ENCODE measurements at regions of chr11 and their contacts with region 1.

Region 1: GRCh38 chr11:13868710-13869397 is 93.7 kb upstream of the SPON1 start:
- DNase-seq: peak in 9 of 14 experiments; percentile 2 to 90 (median 37)
- ATAC-seq: peak; percentile 89
- H3K4me3 ChIP-seq: no peak overlapping the region
- H3K4me3 Mint-ChIP-seq: peak overlapping the region; percentile 0
- H3K27ac ChIP-seq: peak overlapping the region; percentile 69 to 71
- H3K27ac Mint-ChIP-seq: peak overlapping the region; percentile 83
- H3K4me1 ChIP-seq: peaks cover 10% of the 10 kb centered on the region
- H3K4me1 Mint-ChIP-seq: peaks cover 54% of the 10 kb centered on the region
- H3K27me3 ChIP-seq: no peaks in the 10 kb centered on the region
- H3K27me3 Mint-ChIP-seq: no peaks in the 10 kb centered on the region
- CTCF ChIP-seq: no peak

Region 2: GRCh38 chr11:12653725-12654124 is 1215.1 kb before region 1 on chr11:
- CTCF ChIA-PET with region 1: no interaction called
- POLR2A ChIA-PET with region 1: no interaction called
- intact Hi-C with region 1: no loop called
- DNase-seq: no peak
- ATAC-seq: no peak
- H3K4me3 ChIP-seq: no peak overlapping the region
- H3K4me3 Mint-ChIP-seq: no peak overlapping the region
- H3K27ac ChIP-seq: no peak overlapping the region
- H3K27ac Mint-ChIP-seq: no peak overlapping the region
- H3K4me1 ChIP-seq: no peaks in the 10 kb centered on the region
- H3K4me1 Mint-ChIP-seq: no peaks in the 10 kb centered on the region
- H3K27me3 ChIP-seq: no peaks in the 10 kb centered on the region
- H3K27me3 Mint-ChIP-seq: peaks cover 13% of the 10 kb centered on the region
- CTCF ChIP-seq: no peak

Region 3: GRCh38 chr11:13781148-13781547 is 87.7 kb before region 1 on chr11:
- CTCF ChIA-PET with region 1: no interaction called
- POLR2A ChIA-PET with region 1: no interaction called
- intact Hi-C with region 1: loop called in 1 of 2 experiments (anchors 5 kb)
- DNase-seq: no peak
- ATAC-seq: no peak
- H3K4me3 ChIP-seq: no peak overlapping the region
- H3K4me3 Mint-ChIP-seq: no peak overlapping the region
- H3K27ac ChIP-seq: no peak overlapping the region
- H3K27ac Mint-ChIP-seq: no peak overlapping the region
- H3K4me1 ChIP-seq: no peaks in the 10 kb centered on the region
- H3K4me1 Mint-ChIP-seq: no peaks in the 10 kb centered on the region
- H3K27me3 ChIP-seq: no peaks in the 10 kb centered on the region
- H3K27me3 Mint-ChIP-seq: no peaks in the 10 kb centered on the region
- CTCF ChIP-seq: no peak

Region 4: DNA sequence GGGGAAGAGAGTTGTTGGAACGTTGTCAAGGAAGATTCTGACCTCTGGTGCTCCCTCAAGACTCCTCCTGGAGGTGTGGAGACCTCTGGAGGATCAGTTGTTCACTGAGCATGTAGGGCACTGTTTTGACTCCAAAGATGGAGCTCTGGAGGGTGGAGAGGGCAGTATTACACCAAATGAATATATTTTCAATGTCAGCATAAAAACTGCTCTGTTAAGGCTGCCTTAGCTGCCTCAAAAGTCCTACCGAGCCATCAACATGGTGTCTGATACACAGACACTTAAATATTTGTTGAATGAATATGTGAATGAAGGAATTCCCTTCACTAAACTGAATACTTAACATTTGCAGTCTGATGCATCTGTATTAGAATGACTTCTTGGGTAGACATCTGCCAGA is 50.5 kb before region 1 on chr11:
- CTCF ChIA-PET with region 1: no interaction called
- POLR2A ChIA-PET with region 1: no interaction called
- intact Hi-C with region 1: no loop called
- DNase-seq: no peak
- ATAC-seq: no peak
- H3K4me3 ChIP-seq: no peak overlapping the region
- H3K4me3 Mint-ChIP-seq: no peak overlapping the region
- H3K27ac ChIP-seq: no peak overlapping the region
- H3K27ac Mint-ChIP-seq: no peak overlapping the region
- H3K4me1 ChIP-seq: no peaks in the 10 kb centered on the region
- H3K4me1 Mint-ChIP-seq: no peaks in the 10 kb centered on the region
- H3K27me3 ChIP-seq: no peaks in the 10 kb centered on the region
- H3K27me3 Mint-ChIP-seq: no peaks in the 10 kb centered on the region
- CTCF ChIP-seq: no peak

Region 5: GRCh38 chr11:13923716-13924650 is 55.1 kb after region 1 on chr11:
- CTCF ChIA-PET with region 1: no interaction called
- POLR2A ChIA-PET with region 1: interaction called, 37 read pairs
- intact Hi-C with region 1: loop called in 1 of 2 experiments (anchors 2 kb)
- DNase-seq: peak in 12 of 14 experiments; percentile 3 to 77 (median 25)
- ATAC-seq: peak; percentile 90
- H3K4me3 ChIP-seq: peak overlapping the region; percentile 17
- H3K4me3 Mint-ChIP-seq: peak overlapping the region; percentile 83
- H3K27ac ChIP-seq: peak overlapping the region; percentile 42 to 87
- H3K27ac Mint-ChIP-seq: peak overlapping the region; percentile 95
- H3K4me1 ChIP-seq: peaks cover 47% of the 10 kb centered on the region
- H3K4me1 Mint-ChIP-seq: peaks cover 70% of the 10 kb centered on the region
- H3K27me3 ChIP-seq: no peaks in the 10 kb centered on the region
- H3K27me3 Mint-ChIP-seq: no peaks in the 10 kb centered on the region
- CTCF ChIP-seq: no peak

Region 6: DNA sequence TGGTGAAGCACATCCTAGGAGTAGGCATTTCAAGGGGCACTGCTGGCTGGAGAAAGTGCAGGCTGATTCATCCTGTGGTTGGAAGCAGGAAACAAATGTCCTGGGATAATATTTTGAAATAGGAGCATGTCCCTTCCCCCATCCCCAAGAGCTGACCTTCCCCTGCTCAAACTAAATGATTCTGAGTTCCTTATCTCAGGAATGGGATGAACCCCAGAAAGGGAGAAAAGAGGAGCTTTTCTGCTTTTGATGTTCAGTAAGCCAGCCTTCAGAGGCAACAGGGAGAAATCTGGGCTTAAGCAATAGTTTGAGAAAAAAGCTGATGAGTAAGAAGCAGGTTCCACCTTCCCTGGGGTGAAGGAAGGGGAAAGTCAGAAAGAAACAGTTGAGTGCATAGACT is 74.1 kb after region 1 on chr11:
- CTCF ChIA-PET with region 1: interaction called, 3 read pairs
- POLR2A ChIA-PET with region 1: interaction called, 49 read pairs
- intact Hi-C with region 1: loop called in 1 of 2 experiments (anchors 1 kb)
- DNase-seq: no peak
- ATAC-seq: no peak
- H3K4me3 ChIP-seq: no peak overlapping the region
- H3K4me3 Mint-ChIP-seq: no peak overlapping the region
- H3K27ac ChIP-seq: no peak overlapping the region
- H3K27ac Mint-ChIP-seq: no peak overlapping the region
- H3K4me1 ChIP-seq: peaks cover 56% of the 10 kb centered on the region
- H3K4me1 Mint-ChIP-seq: peaks cover 71% of the 10 kb centered on the region
- H3K27me3 ChIP-seq: no peaks in the 10 kb centered on the region
- H3K27me3 Mint-ChIP-seq: no peaks in the 10 kb centered on the region
- CTCF ChIP-seq: no peak

Region 7: GRCh38 chr11:13962562-13963168 is 93.8 kb after region 1 on chr11 and contains the start of gene SPON1:
- CTCF ChIA-PET with region 1: no interaction called
- POLR2A ChIA-PET with region 1: interaction called, 13 read pairs
- intact Hi-C with region 1: loop called (anchors 5 kb)
- DNase-seq: peak; percentile 30 to 74 (median 52)
- ATAC-seq: peak; percentile 84
- H3K4me3 ChIP-seq: peak within 1 kb of the TSS; percentile 45
- H3K4me3 Mint-ChIP-seq: peak within 1 kb of the TSS; percentile 83
- H3K27ac ChIP-seq: no peak within 1 kb of the TSS
- H3K27ac Mint-ChIP-seq: no peak within 1 kb of the TSS
- H3K4me1 ChIP-seq: peaks cover 24% of the 10 kb centered on the region
- H3K4me1 Mint-ChIP-seq: peaks cover 13% of the 10 kb centered on the region
- H3K27me3 ChIP-seq: peaks cover 33 to 59% of the 10 kb centered on the region in 2 experiments
- H3K27me3 Mint-ChIP-seq: peaks cover 75% of the 10 kb centered on the region
- CTCF ChIP-seq: no peak
- total RNA-seq, gene SPON1: 2.1 to 2.2 TPM

Region 8: GRCh38 chr11:14148653-14149273 is 279.9 kb after region 1 on chr11:
- CTCF ChIA-PET with region 1: no interaction called
- POLR2A ChIA-PET with region 1: no interaction called
- intact Hi-C with region 1: loop called in 1 of 2 experiments (anchors 10 kb)
- DNase-seq: peak in 3 of 14 experiments; percentile 56 to 64 (median 63)
- ATAC-seq: peak; percentile 97
- H3K4me3 ChIP-seq: no peak overlapping the region
- H3K4me3 Mint-ChIP-seq: no peak overlapping the region
- H3K27ac ChIP-seq: no peak overlapping the region
- H3K27ac Mint-ChIP-seq: no peak overlapping the region
- H3K4me1 ChIP-seq: no peaks in the 10 kb centered on the region
- H3K4me1 Mint-ChIP-seq: peaks cover 5% of the 10 kb centered on the region
- H3K27me3 ChIP-seq: no peaks in the 10 kb centered on the region
- H3K27me3 Mint-ChIP-seq: no peaks in the 10 kb centered on the region
- CTCF ChIP-seq: peak; percentile 68

Measured in CD4-positive, alpha-beta T cell (primary cell).